ENCODE measurements at regions of chr9 and their contacts with region 1.

Region 1: GRCh38 chr9:71683598-71684235 is 84.6 kb downstream of the CEMIP2 start:
- DNase-seq: no peak
- H3K4me3 ChIP-seq: no peak overlapping the region
- H3K27ac ChIP-seq: no peak overlapping the region
- H3K4me1 ChIP-seq: peaks cover 15 to 45% (median 29%) of the 10 kb centered on the region in 4 donors
- H3K27me3 ChIP-seq: no peaks in the 10 kb centered on the region
- CTCF ChIP-seq: peak in 2 of 3 experiments; percentile 13 to 54
- EP300 ChIP-seq: no peak
- POLR2A ChIP-seq: no peak

Region 2: GRCh38 chr9:71638627-71639026 is 45.1 kb before region 1 on chr9:
- intact Hi-C with region 1: loop called (anchors 10 kb)
- DNase-seq: peak; percentile 89
- H3K4me3 ChIP-seq: no peak overlapping the region
- H3K27ac ChIP-seq: peak overlapping the region; percentile 1 to 64 (median 23)
- H3K4me1 ChIP-seq: no peaks in the 10 kb centered on the region
- H3K27me3 ChIP-seq: no peaks in the 10 kb centered on the region
- CTCF ChIP-seq: no peak
- EP300 ChIP-seq: peak; percentile 31
- POLR2A ChIP-seq: no peak

Region 3: GRCh38 chr9:71768388-71769174 is 84.9 kb after region 1 on chr9 and contains the start of gene CEMIP2:
- intact Hi-C with region 1: loop called (anchors 10 kb)
- DNase-seq: peak; percentile 96
- H3K4me3 ChIP-seq: peak within 1 kb of the TSS; percentile 66 to 83 (median 76)
- H3K27ac ChIP-seq: peak within 1 kb of the TSS; percentile 94 to 98 (median 96)
- H3K4me1 ChIP-seq: peaks cover 19 to 52% (median 51%) of the 10 kb centered on the region in 4 donors
- H3K27me3 ChIP-seq: no peaks in the 10 kb centered on the region
- CTCF ChIP-seq: peak; percentile 37 to 56 (median 51)
- EP300 ChIP-seq: no peak
- POLR2A ChIP-seq: peak; percentile 44
- total RNA-seq, gene CEMIP2: 18.5 to 144 (median 26.8) TPM